Activated CD8-positive, alpha-beta T cell treated with anti-CD3 and anti-CD28 coated beads for 36 hours (primary cell): ENCODE measurements at regions of chr7 and their contacts with region 1.

Region 1: GRCh38 chr7:128425850-128426249 is 16.1 kb upstream of the IMPDH1 start:
- DNase-seq: peak; percentile 93
- ATAC-seq: peak; percentile 82
- H3K4me3 Mint-ChIP-seq: no peak overlapping the region
- H3K27ac Mint-ChIP-seq: no peak overlapping the region
- H3K4me1 Mint-ChIP-seq: peaks cover 21% of the 10 kb centered on the region
- H3K27me3 Mint-ChIP-seq: peaks cover 12% of the 10 kb centered on the region
- CTCF ChIP-seq: peak; percentile 97

Region 2: DNA sequence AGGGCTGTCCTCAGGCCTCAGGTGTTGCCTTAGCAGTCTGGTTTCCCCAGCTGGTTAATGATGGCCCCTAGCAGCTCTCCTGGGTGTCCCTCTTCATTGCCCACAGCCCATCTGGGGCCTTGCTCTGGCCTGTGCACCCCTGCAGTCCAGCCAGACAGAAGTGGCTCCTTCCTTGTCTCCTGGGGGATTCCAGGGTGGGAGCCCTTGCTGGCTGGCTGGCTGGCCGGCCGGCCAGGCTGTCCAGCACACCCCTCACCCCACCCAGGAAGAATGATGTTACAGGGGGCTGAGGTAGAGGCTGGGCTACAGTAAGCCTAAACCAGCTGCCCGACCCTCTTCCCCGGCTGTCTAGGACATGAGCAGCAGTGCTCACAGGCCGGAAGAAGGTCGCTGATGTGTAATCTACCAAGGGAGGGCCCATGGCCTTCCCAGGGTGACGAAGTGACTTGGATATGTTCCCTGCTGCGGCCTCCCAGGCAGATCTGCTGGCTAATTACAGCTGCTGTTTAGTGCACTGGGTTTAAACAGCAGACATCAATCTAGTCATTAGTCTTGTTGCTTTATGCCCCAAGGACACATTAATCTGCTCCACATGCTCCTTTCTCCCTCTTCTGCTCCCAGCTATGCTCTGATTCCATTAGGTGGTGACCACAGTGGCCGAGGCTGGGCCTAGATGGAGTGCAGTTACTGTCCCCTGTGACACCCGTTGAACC is 340.8 kb before region 1 on chr7:
- CTCF ChIA-PET with region 1: no interaction called
- POLR2A ChIA-PET with region 1: no interaction called
- intact Hi-C with region 1: no loop called
- DNase-seq: no peak
- ATAC-seq: no peak
- H3K4me3 Mint-ChIP-seq: no peak overlapping the region
- H3K27ac Mint-ChIP-seq: no peak overlapping the region
- H3K4me1 Mint-ChIP-seq: no peaks in the 10 kb centered on the region
- H3K27me3 Mint-ChIP-seq: no peaks in the 10 kb centered on the region
- CTCF ChIP-seq: no peak

Region 3: GRCh38 chr7:128253696-128254095 is 172.2 kb before region 1 on chr7:
- CTCF ChIA-PET with region 1: no interaction called
- POLR2A ChIA-PET with region 1: no interaction called
- intact Hi-C with region 1: no loop called
- DNase-seq: no peak
- ATAC-seq: no peak
- H3K4me3 Mint-ChIP-seq: no peak overlapping the region
- H3K27ac Mint-ChIP-seq: no peak overlapping the region
- H3K4me1 Mint-ChIP-seq: no peaks in the 10 kb centered on the region
- H3K27me3 Mint-ChIP-seq: no peaks in the 10 kb centered on the region
- CTCF ChIP-seq: no peak

Region 4: GRCh38 chr7:128287556-128287955 is 138.3 kb before region 1 on chr7:
- CTCF ChIA-PET with region 1: no interaction called
- POLR2A ChIA-PET with region 1: no interaction called
- intact Hi-C with region 1: no loop called
- DNase-seq: no peak
- ATAC-seq: no peak
- H3K4me3 Mint-ChIP-seq: no peak overlapping the region
- H3K27ac Mint-ChIP-seq: no peak overlapping the region
- H3K4me1 Mint-ChIP-seq: no peaks in the 10 kb centered on the region
- H3K27me3 Mint-ChIP-seq: no peaks in the 10 kb centered on the region
- CTCF ChIP-seq: no peak

Region 5: DNA sequence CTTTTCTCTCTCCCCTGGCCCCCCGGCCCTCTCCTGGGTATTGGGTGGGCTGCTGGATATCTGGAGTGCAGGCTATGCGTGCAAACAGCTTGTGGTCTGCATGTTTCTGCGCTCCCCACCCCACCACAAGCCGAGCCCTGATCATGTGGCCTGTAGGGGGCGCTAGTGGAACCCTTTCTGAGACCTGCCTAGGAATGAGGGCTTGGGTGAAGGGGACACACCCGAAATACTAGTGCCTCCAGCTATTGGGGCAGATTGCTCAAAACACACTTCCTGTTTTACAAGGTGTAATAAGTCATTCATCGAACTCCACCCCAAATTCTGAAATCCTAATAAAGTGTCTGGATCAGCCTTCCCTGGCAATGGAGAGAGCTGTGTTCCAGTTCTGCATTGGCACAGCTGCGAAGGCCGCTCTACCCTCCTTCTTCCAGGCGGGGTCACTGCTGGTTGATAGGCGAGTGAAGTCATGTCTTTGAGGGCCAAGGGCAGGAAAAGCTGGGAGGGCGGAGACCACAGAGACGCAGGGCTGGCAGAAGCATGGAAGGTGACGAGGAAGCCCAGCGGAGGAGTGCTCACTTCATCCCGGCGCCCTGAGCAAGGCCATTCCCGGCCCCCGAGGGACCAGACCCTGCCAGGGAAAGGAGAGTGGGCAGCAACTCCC is 44.6 kb before region 1 on chr7:
- CTCF ChIA-PET with region 1: interaction called, 84 read pairs
- POLR2A ChIA-PET with region 1: no interaction called
- intact Hi-C with region 1: no loop called
- DNase-seq: peak; percentile 73
- ATAC-seq: peak; percentile 61
- H3K4me3 Mint-ChIP-seq: no peak overlapping the region
- H3K27ac Mint-ChIP-seq: no peak overlapping the region
- H3K4me1 Mint-ChIP-seq: no peaks in the 10 kb centered on the region
- H3K27me3 Mint-ChIP-seq: no peaks in the 10 kb centered on the region
- CTCF ChIP-seq: peak; percentile 83

Region 6: DNA sequence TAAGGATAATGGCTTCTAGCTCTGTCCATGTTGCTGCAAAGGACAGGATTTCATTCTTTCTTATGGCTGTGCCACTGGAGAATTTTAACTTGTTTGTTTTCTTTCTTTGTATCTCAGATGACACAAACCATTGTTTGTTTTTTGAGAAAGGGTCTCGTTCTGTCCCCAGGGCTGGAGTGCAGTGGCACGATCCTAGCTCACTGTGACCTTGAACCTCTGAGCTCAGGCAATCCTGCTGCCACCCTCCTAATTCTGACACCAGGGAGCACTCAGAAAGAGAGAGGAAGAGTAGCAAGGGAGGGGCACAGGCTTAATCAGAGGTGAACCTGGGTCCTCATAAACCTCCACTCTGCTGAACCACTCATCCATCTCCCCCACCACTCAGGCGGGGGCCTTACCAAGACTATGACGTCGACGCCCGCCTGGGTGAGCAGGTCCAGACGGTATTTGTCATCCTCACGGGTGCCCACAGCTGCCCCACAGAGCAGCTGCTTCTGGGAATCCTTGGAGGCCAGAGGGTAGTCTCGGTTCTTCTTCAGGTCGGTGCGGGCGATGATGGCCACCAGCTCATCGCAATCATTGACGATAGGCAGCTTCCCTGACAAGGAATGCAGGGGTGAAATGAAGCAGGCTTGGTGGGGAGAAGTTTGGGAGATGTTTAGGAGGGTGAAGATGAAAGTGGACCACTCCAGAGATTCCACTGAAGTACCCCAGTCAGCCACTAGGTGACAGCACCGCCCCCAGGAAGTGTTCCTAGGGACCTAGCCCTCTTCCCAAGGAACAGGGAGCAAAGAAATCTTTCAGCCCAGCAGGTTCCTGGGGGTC is 27.6 kb before region 1 on chr7:
- CTCF ChIA-PET with region 1: interaction called, 155 read pairs
- POLR2A ChIA-PET with region 1: no interaction called
- intact Hi-C with region 1: no loop called
- DNase-seq: peak; percentile 58
- ATAC-seq: peak; percentile 72
- H3K4me3 Mint-ChIP-seq: no peak overlapping the region
- H3K27ac Mint-ChIP-seq: no peak overlapping the region
- H3K4me1 Mint-ChIP-seq: no peaks in the 10 kb centered on the region
- H3K27me3 Mint-ChIP-seq: no peaks in the 10 kb centered on the region
- CTCF ChIP-seq: peak; percentile 96

Region 7: GRCh38 chr7:128437426-128438332 is 11.8 kb after region 1 on chr7:
- CTCF ChIA-PET with region 1: interaction called, 52 read pairs
- POLR2A ChIA-PET with region 1: no interaction called
- intact Hi-C with region 1: no loop called
- DNase-seq: no peak
- ATAC-seq: no peak
- H3K4me3 Mint-ChIP-seq: no peak overlapping the region
- H3K27ac Mint-ChIP-seq: no peak overlapping the region
- H3K4me1 Mint-ChIP-seq: peaks cover 5% of the 10 kb centered on the region
- H3K27me3 Mint-ChIP-seq: peaks cover 3% of the 10 kb centered on the region
- CTCF ChIP-seq: no peak

Region 8: DNA sequence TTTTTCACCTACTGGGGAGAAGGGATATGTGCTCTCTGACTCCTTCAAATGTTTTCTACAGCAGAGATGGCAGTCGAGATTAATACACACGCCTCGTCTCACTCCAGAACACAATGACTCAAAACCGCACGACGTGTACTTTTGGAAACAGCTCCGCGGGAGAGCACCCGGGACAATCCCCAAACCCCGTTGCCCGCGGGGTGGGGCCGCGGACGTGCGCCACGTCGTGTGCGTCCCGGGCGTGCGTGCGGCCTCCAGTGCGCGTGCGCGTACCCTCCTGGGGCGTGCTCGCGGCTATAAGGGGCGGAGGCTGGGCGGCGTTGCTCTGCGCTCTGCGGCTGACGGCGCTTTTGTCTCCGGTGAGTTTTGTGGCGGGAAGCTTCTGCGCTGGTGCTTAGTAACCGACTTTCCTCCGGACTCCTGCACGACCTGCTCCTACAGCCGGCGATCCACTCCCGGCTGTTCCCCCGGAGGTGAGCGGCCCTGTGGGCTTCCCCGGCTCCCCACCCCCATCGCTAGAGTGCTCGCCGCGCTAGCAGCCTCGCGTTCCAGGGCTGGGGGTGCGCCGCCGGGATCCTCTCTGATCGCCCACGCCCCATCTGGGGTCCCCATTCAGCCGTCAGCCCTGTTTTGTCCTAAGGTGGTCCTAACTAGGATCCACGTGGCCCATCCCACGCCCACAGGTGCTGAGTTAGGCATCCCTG is 29.9 kb after region 1 on chr7 and contains the start of gene HILPDA:
- CTCF ChIA-PET with region 1: interaction called, 345 read pairs
- POLR2A ChIA-PET with region 1: interaction called, 46 read pairs
- intact Hi-C with region 1: loop called (anchors 1 kb)
- DNase-seq: peak; percentile 96
- ATAC-seq: peak; percentile 81
- H3K4me3 Mint-ChIP-seq: peak within 1 kb of the TSS; percentile 83
- H3K27ac Mint-ChIP-seq: peak within 1 kb of the TSS; percentile 99
- H3K4me1 Mint-ChIP-seq: peaks cover 59% of the 10 kb centered on the region
- H3K27me3 Mint-ChIP-seq: peaks cover 11% of the 10 kb centered on the region
- CTCF ChIP-seq: no peak
- total RNA-seq, gene HILPDA: 344 to 362 TPM